ENCODE measurements at regions of chr7 and their contacts with region 1.

Region 1: DNA sequence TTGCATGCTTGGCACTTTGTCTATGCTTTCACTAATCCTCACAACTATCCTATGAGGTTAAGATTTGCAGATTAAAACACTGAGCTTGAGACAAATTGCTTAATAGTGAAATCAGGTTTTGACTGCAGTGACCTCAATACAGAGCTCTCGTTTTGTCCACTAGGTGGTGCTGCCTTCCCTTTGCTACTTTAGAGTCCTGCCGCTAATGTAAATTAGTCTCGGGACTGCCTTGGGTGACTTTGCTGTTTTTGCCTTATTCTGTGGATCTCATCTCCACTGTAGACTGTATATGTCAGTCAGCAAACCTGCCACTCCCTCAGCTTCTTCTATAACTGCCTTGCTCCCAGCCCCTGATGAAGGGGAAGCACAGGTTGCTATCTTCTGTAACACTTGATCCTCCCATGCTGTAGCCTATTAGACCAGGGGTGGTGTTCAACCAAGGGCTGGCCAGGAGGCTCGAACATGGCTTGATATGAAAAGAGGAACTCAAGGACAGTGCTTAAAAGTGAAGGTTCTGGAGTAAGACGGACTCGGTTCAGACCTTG is 26.0 kb downstream of the ASB4 start:
- DNase-seq: peak; percentile 22
- ATAC-seq: peak; percentile 95
- H3K4me3 Mint-ChIP-seq: peak overlapping the region; percentile 21
- H3K27ac Mint-ChIP-seq: no peak overlapping the region
- H3K4me1 Mint-ChIP-seq: peaks cover 9% of the 10 kb centered on the region
- H3K27me3 Mint-ChIP-seq: peaks cover 8% of the 10 kb centered on the region
- CTCF ChIP-seq: no peak

Region 2: DNA sequence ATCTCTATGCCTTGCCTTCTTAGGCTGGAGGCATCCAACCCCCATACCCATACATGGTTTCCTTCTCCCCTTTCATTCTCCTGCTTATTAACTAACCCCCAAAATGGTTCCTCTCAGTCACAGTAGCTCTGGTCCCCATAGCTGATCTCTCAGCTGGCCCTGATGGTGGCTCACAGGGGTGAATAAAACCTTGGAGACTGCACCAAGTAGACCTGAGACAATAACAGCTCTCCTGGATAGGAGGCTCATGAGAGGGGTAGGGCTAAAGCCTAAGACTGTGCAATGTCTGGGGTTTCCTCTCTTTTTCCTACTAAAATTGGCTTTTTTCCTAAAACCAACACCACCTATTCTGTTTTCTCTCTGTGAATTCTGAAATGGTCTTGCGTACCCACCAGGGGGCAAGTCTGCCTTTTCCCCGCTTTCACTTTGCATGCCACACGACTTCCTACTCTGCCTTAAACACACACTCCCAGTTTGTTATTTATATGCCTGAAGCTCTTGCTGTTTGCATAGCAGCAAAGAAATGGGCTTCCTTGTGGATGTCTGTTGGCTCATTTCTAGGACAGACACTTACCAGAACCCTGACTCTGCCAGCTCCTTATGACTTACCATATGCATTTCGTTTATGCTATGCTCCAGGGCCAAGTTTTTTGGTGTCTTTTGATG is 169.0 kb before region 1 on chr7:
- CTCF ChIA-PET with region 1: no interaction called
- POLR2A ChIA-PET with region 1: no interaction called
- intact Hi-C with region 1: no loop called
- DNase-seq: no peak
- ATAC-seq: no peak
- H3K4me3 Mint-ChIP-seq: no peak overlapping the region
- H3K27ac Mint-ChIP-seq: no peak overlapping the region
- H3K4me1 Mint-ChIP-seq: no peaks in the 10 kb centered on the region
- H3K27me3 Mint-ChIP-seq: peaks cover 3% of the 10 kb centered on the region
- CTCF ChIP-seq: no peak

Region 3: GRCh38 chr7:95545078-95545498 is 33.3 kb after region 1 on chr7:
- CTCF ChIA-PET with region 1: interaction called, 13 read pairs
- POLR2A ChIA-PET with region 1: no interaction called
- intact Hi-C with region 1: no loop called
- DNase-seq: no peak
- ATAC-seq: no peak
- H3K4me3 Mint-ChIP-seq: no peak overlapping the region
- H3K27ac Mint-ChIP-seq: no peak overlapping the region
- H3K4me1 Mint-ChIP-seq: peaks cover 9% of the 10 kb centered on the region
- H3K27me3 Mint-ChIP-seq: no peaks in the 10 kb centered on the region
- CTCF ChIP-seq: no peak

Region 4: DNA sequence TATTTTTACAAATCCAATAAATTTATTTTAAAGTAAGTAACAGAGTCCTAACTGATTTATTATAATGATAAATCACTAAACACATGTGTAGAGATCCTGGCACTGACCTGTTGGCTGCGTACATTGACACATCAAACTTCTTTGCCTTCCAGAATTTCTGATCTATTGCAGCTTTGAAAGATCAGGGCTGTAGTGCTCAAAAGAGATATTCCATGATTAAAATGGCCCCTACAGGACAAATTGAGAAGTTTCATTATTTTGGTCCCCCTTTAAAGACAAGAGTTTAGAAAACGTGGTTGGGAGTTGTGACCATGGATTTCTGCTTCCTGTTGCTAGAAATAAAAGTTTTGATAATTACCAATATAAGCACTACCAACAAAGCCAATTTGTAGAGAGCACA is 172.2 kb after region 1 on chr7:
- CTCF ChIA-PET with region 1: interaction called, 278 read pairs
- POLR2A ChIA-PET with region 1: no interaction called
- intact Hi-C with region 1: loop called (anchors 1 kb)
- DNase-seq: no peak
- ATAC-seq: no peak
- H3K4me3 Mint-ChIP-seq: no peak overlapping the region
- H3K27ac Mint-ChIP-seq: no peak overlapping the region
- H3K4me1 Mint-ChIP-seq: no peaks in the 10 kb centered on the region
- H3K27me3 Mint-ChIP-seq: no peaks in the 10 kb centered on the region
- CTCF ChIP-seq: no peak

Region 5: GRCh38 chr7:95690367-95690947 is 178.7 kb after region 1 on chr7:
- CTCF ChIA-PET with region 1: interaction called, 278 read pairs
- POLR2A ChIA-PET with region 1: interaction called, 5 read pairs
- intact Hi-C with region 1: loop called (anchors 1 kb)
- DNase-seq: no peak
- ATAC-seq: peak; percentile 72
- H3K4me3 Mint-ChIP-seq: peak overlapping the region; percentile 2
- H3K27ac Mint-ChIP-seq: no peak overlapping the region
- H3K4me1 Mint-ChIP-seq: peaks cover 4% of the 10 kb centered on the region
- H3K27me3 Mint-ChIP-seq: peaks cover 3% of the 10 kb centered on the region
- CTCF ChIP-seq: peak; percentile 87

Region 6: DNA sequence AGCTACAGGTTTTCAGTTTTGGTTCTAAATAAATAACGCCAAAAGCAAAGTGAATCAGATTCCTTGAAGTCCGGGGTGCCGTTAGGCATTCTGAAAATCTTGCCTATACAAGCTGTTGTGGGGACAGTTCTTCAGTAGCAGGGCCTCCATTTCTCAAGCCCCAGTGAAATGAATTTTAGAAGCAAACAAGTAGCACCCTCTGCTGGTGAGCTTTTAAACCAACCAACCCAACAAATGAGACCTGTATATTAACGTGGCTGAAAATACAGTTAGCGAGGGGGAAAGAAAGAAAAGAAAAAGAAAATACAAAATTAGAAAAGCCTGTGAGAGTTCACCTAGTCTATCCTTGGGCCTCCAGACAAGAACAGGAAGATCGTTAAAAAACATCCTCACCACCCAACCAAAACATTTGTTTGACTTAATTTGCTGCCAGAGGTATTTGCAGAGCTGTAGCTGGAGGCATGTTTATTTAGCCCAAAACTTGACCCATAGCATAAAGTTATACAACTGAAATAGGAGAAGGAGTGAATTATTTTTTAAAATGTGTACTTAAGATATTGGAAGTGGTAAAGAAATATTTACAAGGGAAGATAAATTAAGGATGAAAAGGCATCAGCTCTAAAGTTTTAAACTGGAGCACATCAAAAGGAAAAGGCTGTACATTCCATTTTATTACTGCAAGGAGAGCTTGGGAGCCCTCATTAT is 359.4 kb after region 1 on chr7:
- CTCF ChIA-PET with region 1: interaction called, 8 read pairs
- POLR2A ChIA-PET with region 1: no interaction called
- intact Hi-C with region 1: loop called (anchors 1 kb)
- DNase-seq: no peak
- ATAC-seq: no peak
- H3K4me3 Mint-ChIP-seq: no peak overlapping the region
- H3K27ac Mint-ChIP-seq: no peak overlapping the region
- H3K4me1 Mint-ChIP-seq: no peaks in the 10 kb centered on the region
- H3K27me3 Mint-ChIP-seq: peaks cover 7% of the 10 kb centered on the region
- CTCF ChIP-seq: no peak

Measured in activated B cell treated with CpG ODN at 0.5 μM for 24 hours (primary cell).